Common myeloid progenitor, CD34-positive (primary cell): ENCODE measurements at regions of chrX and their contacts with region 1.

Region 1: DNA sequence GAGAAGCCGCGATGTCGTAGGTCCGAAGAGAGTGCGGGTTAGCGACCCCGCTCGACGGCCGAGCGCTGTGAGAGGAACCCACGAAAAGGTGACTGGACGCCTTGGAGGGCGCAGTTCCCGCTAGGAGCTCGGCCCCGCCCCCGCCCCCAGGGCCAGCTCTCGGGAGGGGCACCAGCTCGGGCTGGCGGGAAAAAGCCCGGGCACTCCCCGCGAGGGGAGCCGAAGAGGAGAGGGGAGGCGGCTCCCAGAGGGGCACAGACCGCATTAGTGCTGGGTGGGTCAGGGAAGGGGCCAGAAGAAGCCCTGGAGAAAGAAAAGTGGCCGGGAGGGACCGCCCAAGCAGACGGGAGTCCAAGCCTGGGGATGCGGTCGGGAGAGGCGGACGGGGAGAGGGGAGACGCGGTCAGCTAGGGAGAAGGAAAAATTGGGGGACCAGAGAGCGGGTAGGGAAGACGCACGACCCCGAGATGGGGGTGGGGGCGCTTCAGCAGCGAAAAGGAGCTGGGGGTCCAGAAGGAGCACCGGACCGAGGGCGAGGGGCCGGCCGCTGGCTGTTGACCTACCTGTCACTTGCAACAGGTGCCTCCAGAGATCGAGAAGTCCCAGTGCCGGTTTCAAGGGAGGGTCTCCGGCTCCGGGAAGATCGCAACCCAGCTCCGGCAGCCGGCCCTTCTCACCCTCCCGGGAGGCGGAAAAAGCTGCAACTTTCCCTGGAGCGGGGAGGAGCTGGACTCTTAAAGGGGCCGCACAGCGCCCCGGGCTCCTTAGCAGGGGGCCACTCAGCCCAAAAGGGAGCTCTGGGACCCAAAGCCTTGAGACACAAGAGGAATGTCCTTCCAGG is at the start of gene SYTL4:
- DNase-seq: peak; percentile 21 to 48 (median 33)
- H3K4me3 ChIP-seq: peak within 1 kb of the TSS; percentile 62 to 92 (median 80)
- H3K27ac ChIP-seq: peak within 1 kb of the TSS in 1 of 2 experiments; percentile 53
- H3K4me1 ChIP-seq: peaks cover 0 to 34% (median 5%) of the 10 kb centered on the region in 4 experiments
- H3K27me3 ChIP-seq: peaks cover 0 to 11% (median 0%) of the 10 kb centered on the region in 5 experiments

Region 2: GRCh38 chrX:100743009-100743607 is 11.4 kb after region 1 on chrX:
- CTCF ChIA-PET with region 1: interaction called, 12 read pairs
- POLR2A ChIA-PET with region 1: no interaction called
- DNase-seq: peak; percentile 78 to 92 (median 85)
- H3K4me3 ChIP-seq: no peak overlapping the region
- H3K27ac ChIP-seq: peak overlapping the region; percentile 19 to 77
- H3K4me1 ChIP-seq: peaks cover 0 to 38% (median 15%) of the 10 kb centered on the region in 4 experiments
- H3K27me3 ChIP-seq: peaks cover 0 to 3% (median 0%) of the 10 kb centered on the region in 5 experiments